ENCODE measurements at regions of chr5 and their contacts with region 1.

Region 1: DNA sequence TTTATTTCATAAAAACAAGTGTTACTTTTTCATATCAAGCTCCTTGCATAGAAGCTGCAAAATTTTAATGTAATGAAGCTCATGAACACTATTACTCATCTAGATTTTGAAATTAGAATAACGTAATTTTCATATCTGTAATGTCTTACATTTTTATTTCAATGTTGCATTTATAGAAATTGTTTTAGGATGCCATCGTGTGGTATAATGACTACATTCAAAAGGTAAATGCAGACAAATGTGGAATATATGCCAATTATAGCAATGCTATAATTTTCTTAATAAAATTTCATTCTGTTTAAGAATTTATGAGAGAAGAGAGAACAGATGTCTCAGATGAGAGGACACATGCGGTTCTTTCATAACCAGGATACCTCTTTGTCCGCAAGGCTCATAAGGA is 230.2 kb downstream of the TMEM232 start:
- DNase-seq: no peak
- ATAC-seq: no peak
- H3K4me3 ChIP-seq: no peak overlapping the region
- H3K27ac ChIP-seq: no peak overlapping the region
- H3K4me1 ChIP-seq: no peaks in the 10 kb centered on the region
- H3K27me3 ChIP-seq: no peaks in the 10 kb centered on the region
- CTCF ChIP-seq: no peak
- POLR2A ChIP-seq: no peak
- RAD21 ChIP-seq: no peak

Region 2: GRCh38 chr5:109656829-109657228 is 839.4 kb before region 1 on chr5:
- CTCF ChIA-PET with region 1: no interaction called
- POLR2A ChIA-PET with region 1: no interaction called
- dilution Hi-C with region 1: no loop called
- in situ Hi-C with region 1: no loop called
- intact Hi-C with region 1: loop called (anchors 10 kb)
- DNase-seq: peak; percentile 29
- ATAC-seq: no peak
- H3K4me3 ChIP-seq: no peak overlapping the region
- H3K27ac ChIP-seq: no peak overlapping the region
- H3K4me1 ChIP-seq: no peaks in the 10 kb centered on the region
- H3K27me3 ChIP-seq: no peaks in the 10 kb centered on the region
- CTCF ChIP-seq: no peak
- POLR2A ChIP-seq: no peak
- RAD21 ChIP-seq: no peak

Region 3: GRCh38 chr5:110510146-110510545 is 13.9 kb after region 1 on chr5:
- CTCF ChIA-PET with region 1: no interaction called
- POLR2A ChIA-PET with region 1: no interaction called
- dilution Hi-C with region 1: no loop called
- in situ Hi-C with region 1: no loop called
- intact Hi-C with region 1: no loop called
- DNase-seq: no peak
- ATAC-seq: no peak
- H3K4me3 ChIP-seq: no peak overlapping the region
- H3K27ac ChIP-seq: no peak overlapping the region
- H3K4me1 ChIP-seq: no peaks in the 10 kb centered on the region
- H3K27me3 ChIP-seq: no peaks in the 10 kb centered on the region
- CTCF ChIP-seq: no peak
- POLR2A ChIP-seq: no peak
- RAD21 ChIP-seq: no peak

Measured in IMR-90 (cell line).